ENCODE measurements at regions of chr2 and their contacts with region 1.

Region 1: GRCh38 chr2:195898505-195899191 is 170.0 kb downstream of the DNAH7 start:
- DNase-seq: peak; percentile 86

Region 2: GRCh38 chr2:195871326-195871725 is 27.3 kb before region 1 on chr2:
- intact Hi-C with region 1: loop called in 1 of 2 experiments (anchors 2 kb)
- DNase-seq: no peak

Region 3: GRCh38 chr2:195923889-195924288 is 25.2 kb after region 1 on chr2:
- intact Hi-C with region 1: no loop called
- DNase-seq: no peak